ENCODE measurements at regions of chr1 and their contacts with region 1.

Region 1: DNA sequence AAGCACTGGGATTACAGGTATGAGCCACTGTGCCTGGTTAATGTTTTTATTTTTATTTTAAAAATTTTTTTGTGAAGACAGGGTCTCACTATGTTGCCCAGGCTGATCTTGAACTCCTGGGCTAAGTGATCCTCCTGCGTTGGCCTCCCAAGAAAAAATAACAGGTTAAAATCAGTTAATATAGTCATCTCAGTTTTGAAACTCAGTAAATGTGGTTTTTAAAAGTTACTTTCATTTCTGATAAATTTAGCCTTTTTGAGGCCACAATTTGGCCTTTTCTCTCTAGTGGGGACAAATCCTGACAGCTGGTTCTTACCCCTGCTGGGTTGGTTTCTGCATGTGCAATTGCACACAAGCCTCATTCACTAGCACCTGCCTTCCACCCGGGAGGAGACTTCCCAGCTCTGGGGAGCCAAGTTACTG is 13.3 kb downstream of the PMF1 start:
- DNase-seq: no peak
- ATAC-seq: no peak
- H3K4me3 Mint-ChIP-seq: no peak overlapping the region
- H3K27ac Mint-ChIP-seq: no peak overlapping the region
- H3K4me1 Mint-ChIP-seq: peaks cover 4% of the 10 kb centered on the region
- H3K27me3 Mint-ChIP-seq: no peaks in the 10 kb centered on the region
- CTCF ChIP-seq: no peak

Region 2: GRCh38 chr1:156090822-156091188 is 135.3 kb before region 1 on chr1:
- CTCF ChIA-PET with region 1: interaction called, 14 read pairs
- POLR2A ChIA-PET with region 1: interaction called, 4 read pairs
- intact Hi-C with region 1: loop called (anchors 1 kb)
- DNase-seq: peak; percentile 81
- ATAC-seq: peak; percentile 92
- H3K4me3 Mint-ChIP-seq: no peak overlapping the region
- H3K27ac Mint-ChIP-seq: peak overlapping the region; percentile 48
- H3K4me1 Mint-ChIP-seq: peaks cover 9% of the 10 kb centered on the region
- H3K27me3 Mint-ChIP-seq: peaks cover 8% of the 10 kb centered on the region
- CTCF ChIP-seq: peak; percentile 62

Region 3: DNA sequence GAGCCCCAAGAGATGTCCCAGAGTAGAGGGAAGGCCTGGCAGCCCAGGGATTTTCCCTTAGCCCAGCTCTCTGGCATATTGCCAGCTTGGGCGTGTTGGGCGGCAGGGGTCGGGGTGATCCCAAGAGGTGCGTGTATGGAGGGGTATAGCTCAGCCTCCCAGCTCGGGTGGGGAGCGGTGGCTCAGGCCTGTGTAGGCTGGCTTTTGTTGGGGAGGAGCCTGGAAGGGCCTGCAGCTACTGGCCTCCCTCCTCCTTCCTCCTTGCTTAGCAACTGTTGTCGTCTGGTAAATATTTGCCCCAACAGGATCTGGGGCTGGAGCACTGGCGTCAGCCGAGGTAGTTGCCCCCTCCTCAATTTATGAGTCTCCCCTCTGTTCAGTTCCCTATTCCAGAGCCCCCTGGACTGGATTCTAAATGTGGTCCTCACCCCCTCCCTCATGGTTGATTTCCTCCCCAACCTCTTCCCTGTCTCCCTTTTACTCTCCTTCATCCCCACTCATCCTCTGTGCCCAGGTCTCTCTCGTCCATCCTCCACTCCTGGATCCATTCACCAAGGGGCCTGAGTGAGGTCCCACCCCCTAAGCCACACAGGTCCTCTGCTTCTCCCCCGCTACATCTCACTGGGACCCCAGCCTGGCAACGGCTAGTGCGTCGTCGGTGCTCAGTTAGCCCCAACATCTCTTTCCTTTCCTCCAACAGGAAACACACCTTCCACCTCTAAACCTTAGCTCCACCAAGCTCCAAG is 121.9 kb before region 1 on chr1:
- CTCF ChIA-PET with region 1: interaction called, 3 read pairs
- POLR2A ChIA-PET with region 1: interaction called, 11 read pairs
- intact Hi-C with region 1: no loop called
- DNase-seq: peak; percentile 35
- ATAC-seq: no peak
- H3K4me3 Mint-ChIP-seq: no peak overlapping the region
- H3K27ac Mint-ChIP-seq: peak overlapping the region; percentile 66
- H3K4me1 Mint-ChIP-seq: peaks cover 63% of the 10 kb centered on the region
- H3K27me3 Mint-ChIP-seq: no peaks in the 10 kb centered on the region
- CTCF ChIP-seq: no peak

Region 4: DNA sequence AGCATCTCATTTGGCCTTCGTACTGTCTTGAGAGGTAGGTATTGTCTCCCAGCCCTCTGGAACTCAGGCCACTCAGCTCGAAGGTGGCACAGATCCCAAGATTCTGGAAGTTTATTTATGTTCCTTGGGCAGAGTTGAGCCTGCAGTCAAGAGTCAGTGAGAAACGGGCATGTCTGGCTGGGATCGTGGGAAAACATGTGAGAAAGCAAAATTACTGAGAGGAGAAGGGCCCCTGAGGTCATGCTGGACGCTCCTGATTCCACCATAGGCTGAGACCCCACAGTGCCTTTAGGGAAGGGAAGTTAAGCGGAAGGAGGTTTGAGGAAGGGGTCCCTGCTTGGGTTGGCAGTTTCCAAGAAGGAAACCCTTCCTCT is 85.3 kb before region 1 on chr1:
- CTCF ChIA-PET with region 1: interaction called, 215 read pairs
- POLR2A ChIA-PET with region 1: interaction called, 53 read pairs
- intact Hi-C with region 1: loop called (anchors 1 kb)
- DNase-seq: no peak
- ATAC-seq: no peak
- H3K4me3 Mint-ChIP-seq: no peak overlapping the region
- H3K27ac Mint-ChIP-seq: peak overlapping the region; percentile 13
- H3K4me1 Mint-ChIP-seq: peaks cover 1% of the 10 kb centered on the region
- H3K27me3 Mint-ChIP-seq: peaks cover 9% of the 10 kb centered on the region
- CTCF ChIP-seq: no peak

Region 5: DNA sequence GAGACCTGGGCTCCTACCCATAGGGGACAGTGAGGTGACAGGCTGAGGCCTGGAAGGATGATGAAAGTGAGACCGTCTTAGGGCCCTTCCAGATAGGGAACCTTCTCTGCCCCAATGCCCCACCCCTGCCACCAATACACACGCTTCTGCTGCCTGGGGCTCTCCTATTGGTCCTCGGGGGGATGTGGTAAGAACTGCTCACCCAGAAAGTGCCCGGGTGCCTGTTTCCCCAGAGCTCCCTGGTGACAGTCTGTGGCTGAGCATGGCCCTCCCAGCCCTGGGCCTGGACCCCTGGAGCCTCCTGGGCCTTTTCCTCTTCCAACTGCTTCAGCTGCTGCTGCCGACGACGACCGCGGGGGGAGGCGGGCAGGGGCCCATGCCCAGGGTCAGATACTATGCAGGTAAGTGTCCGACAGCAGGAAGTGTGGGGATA is 71.8 kb before region 1 on chr1:
- CTCF ChIA-PET with region 1: interaction called, 215 read pairs
- POLR2A ChIA-PET with region 1: interaction called, 53 read pairs
- intact Hi-C with region 1: no loop called
- DNase-seq: peak; percentile 66
- ATAC-seq: peak; percentile 95
- H3K4me3 Mint-ChIP-seq: peak overlapping the region; percentile 81
- H3K27ac Mint-ChIP-seq: peak overlapping the region; percentile 82
- H3K4me1 Mint-ChIP-seq: peaks cover 95% of the 10 kb centered on the region
- H3K27me3 Mint-ChIP-seq: peaks cover 9% of the 10 kb centered on the region
- CTCF ChIP-seq: no peak

Region 6: DNA sequence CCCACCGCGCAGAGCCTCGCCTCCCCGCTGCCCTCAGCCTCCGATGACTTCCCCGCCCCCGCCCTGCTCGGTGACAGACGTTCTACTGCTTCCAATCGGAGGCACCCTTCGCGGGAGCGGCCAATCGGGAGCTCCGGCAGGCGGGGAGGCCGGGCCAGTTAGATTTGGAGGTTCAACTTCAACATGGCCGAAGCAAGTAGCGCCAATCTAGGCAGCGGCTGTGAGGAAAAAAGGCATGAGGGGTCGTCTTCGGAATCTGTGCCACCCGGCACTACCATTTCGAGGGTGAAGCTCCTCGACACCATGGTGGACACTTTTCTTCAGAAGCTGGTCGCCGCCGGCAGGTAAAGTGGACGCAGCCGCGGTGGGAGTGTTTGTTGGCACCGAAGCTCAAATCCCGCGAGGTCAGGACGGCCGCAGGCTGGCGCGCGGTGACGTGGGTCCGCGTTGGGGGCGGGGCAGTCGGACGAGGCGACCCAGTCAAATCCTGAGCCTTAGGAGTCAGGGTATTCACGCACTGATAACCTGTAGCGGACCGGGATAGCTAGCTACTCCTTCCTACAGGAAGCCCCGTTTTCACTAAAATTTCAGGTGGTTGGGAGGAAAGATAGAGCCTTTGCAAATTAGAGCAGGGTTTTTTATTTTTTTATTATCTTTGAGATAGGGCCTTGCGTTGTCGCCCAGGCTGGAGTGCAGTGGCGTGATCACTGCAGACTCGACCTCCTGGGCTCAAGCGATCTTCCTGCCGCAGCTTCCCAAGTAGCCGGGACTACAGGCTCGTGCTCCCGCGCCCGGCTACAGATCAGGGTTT is 13.1 kb before region 1 on chr1 and contains the start of gene PMF1:
- CTCF ChIA-PET with region 1: interaction called, 26 read pairs
- POLR2A ChIA-PET with region 1: interaction called, 22 read pairs
- intact Hi-C with region 1: no loop called
- DNase-seq: peak; percentile 92
- ATAC-seq: peak; percentile 97
- H3K4me3 Mint-ChIP-seq: peak within 1 kb of the TSS; percentile 96
- H3K27ac Mint-ChIP-seq: peak within 1 kb of the TSS; percentile 98
- H3K4me1 Mint-ChIP-seq: peaks cover 28% of the 10 kb centered on the region
- H3K27me3 Mint-ChIP-seq: no peaks in the 10 kb centered on the region
- CTCF ChIP-seq: no peak
- total RNA-seq, gene PMF1: 68.8 and 75.8 TPM in 2 replicates

Measured in activated B cell treated with CpG ODN at 0.5 μM for 24 hours (primary cell).